CD14-positive monocyte (primary cell): ENCODE measurements at regions of chr19 and their contacts with region 1.

Region 1: DNA sequence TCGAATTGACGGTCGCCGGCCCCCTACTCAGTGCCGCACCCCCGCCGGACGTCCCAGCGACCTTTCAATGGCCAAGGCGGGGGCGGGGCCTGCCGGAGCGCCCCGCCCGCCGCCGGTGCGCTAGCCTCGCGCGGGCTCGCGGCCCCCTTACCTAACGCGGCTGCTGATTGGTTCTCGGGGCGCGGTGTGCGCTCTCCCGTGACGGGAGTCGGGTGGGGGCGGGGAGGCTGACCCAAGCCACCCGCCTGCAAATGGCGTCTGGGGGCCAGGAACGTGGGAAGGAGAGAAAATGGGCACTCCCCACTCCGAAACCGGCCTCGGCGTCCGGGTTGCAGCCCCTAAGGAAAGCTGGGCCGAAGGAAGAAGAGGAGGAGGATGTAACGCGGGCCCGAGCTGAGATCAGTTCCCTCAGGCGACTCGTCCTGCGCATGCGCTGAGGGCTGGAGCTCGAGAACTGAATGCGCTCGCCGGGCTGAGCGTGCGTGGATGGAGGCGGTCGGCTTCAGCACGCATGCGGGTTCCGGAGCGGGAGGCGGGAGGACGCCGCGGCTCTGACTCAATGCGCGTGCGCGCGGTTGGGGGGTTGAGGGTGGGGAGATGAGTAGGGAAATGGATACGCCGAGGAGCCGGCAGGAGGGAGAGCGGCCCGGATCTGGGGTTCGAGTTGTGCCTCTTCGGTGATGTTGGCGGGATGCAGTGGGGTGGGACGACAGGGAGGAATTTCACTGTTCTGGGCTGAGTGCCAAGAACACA is at the start of gene SMG9:
- DNase-seq: peak; percentile 96 to 98 (median 98)
- H3K4me3 ChIP-seq: peak within 1 kb of the TSS; percentile 55 to 89 (median 83)
- H3K4me3 Mint-ChIP-seq: peak within 1 kb of the TSS; percentile 93 to 94
- H3K27ac ChIP-seq: peak within 1 kb of the TSS; percentile 96
- H3K27ac Mint-ChIP-seq: peak within 1 kb of the TSS; percentile 96 to 99 (median 98)
- H3K4me1 ChIP-seq: peaks cover 48 to 55% of the 10 kb centered on the region in 2 donors
- H3K4me1 Mint-ChIP-seq: peaks cover 66% of the 10 kb centered on the region
- H3K27me3 ChIP-seq: no peaks in the 10 kb centered on the region
- H3K27me3 Mint-ChIP-seq: no peaks in the 10 kb centered on the region
- CTCF ChIP-seq: no peak
- polyA plus RNA-seq, gene SMG9: 1.3 to 26.1 (median 2.4) TPM

Region 2: DNA sequence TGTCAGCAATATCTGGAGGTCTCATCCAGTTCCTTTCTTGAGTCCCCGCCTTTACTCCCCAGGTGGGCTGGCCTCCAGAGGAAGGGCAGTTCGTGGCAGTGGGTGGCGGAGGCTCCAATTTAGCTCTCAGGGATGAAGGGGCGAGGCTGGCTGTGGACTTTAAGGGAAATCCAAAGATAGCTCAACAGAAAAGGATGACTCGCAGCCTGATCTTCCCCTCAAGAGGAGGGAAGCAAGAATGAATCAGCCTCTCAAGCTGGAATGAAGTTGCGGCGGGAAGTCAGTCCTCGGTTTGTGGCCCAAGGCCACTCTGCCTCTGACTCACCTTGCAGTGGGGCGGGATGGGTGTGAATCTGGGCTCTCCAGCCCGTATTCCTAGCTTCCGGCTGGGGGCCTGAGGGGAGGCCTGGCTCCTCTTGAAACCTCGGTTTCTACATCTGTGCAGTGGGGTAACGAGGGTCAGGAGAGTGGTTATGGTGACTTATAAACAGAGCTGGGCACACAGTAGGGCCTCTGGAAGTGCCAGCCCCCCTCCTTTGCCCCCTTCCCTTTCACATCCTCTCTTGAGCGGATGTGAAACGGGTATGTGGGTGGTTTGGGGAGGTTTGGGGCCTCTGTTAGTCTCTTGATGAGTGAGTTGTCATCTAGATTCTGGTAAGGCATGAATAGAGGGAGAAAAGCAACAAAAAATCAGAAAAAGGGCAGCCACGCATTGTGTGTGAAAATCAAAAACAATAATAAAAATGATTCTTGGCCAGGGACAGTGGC is 10.6 kb after region 1 on chr19:
- intact Hi-C with region 1: loop called in 1 of 2 experiments (anchors 1 kb)
- DNase-seq: peak; percentile 89 to 97 (median 96)
- H3K4me3 ChIP-seq: peak overlapping the region in 1 of 3 experiments; percentile 28
- H3K4me3 Mint-ChIP-seq: peak overlapping the region; percentile 16 to 69
- H3K27ac ChIP-seq: peak overlapping the region; percentile 65 to 81
- H3K27ac Mint-ChIP-seq: peak overlapping the region; percentile 90 to 98 (median 93)
- H3K4me1 ChIP-seq: peaks cover 70 to 73% of the 10 kb centered on the region in 2 donors
- H3K4me1 Mint-ChIP-seq: peaks cover 77% of the 10 kb centered on the region
- H3K27me3 ChIP-seq: no peaks in the 10 kb centered on the region
- H3K27me3 Mint-ChIP-seq: peaks cover 0 to 1% (median 0%) of the 10 kb centered on the region in 3 donors
- CTCF ChIP-seq: no peak